Dendritic cell treated with granulocyte-macrophage colony-stimulating factor and Interleukin-4, amounts not matched to agents 40 ng/mL and 50 ng/mL, for 4 days (primary cell): ENCODE measurements at regions of chr17 and their contacts with region 1.

Region 1: DNA sequence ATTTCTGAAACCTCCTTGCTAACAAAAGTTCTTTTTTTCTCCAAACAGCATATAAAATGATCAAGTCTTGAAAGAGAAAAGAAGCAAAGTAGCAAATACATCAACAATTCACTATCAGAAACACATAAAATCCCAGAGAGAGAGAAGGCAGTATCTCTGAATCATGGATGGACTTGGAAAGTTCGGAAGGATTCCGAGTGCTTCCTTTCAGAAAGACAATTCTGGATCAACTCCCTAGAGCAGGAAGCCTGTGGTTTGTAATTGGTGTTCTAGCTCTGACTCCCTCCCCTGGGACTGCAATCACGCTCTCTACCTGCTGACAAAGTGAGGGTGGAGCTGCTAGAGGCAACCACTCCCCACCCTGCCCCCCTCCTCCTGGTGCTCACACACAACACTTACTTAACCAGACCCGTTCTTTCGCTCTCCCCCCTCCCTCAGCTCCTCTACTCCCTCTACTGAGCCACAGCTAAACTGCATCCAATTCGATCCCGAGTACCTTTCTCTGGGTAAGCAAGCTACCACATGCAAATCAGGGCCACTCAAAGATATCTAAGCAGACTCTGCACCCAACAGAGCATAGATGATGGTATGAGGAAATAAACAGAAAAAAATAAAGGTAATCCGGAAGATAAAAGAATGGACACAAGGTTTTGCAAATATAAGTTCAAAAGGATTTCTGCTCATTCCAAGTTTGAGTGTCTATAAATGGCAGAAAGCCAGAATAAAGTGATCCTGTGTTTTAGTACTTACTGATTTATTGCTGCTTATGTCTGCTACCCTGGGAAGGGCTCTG is at the start of gene RNF43:
- H3K4me3 Mint-ChIP-seq: peak within 1 kb of the TSS; percentile 54
- H3K27ac Mint-ChIP-seq: peak within 1 kb of the TSS; percentile 12
- H3K4me1 Mint-ChIP-seq: peaks cover 9% of the 10 kb centered on the region
- H3K27me3 Mint-ChIP-seq: peaks cover 12% of the 10 kb centered on the region

Region 2: DNA sequence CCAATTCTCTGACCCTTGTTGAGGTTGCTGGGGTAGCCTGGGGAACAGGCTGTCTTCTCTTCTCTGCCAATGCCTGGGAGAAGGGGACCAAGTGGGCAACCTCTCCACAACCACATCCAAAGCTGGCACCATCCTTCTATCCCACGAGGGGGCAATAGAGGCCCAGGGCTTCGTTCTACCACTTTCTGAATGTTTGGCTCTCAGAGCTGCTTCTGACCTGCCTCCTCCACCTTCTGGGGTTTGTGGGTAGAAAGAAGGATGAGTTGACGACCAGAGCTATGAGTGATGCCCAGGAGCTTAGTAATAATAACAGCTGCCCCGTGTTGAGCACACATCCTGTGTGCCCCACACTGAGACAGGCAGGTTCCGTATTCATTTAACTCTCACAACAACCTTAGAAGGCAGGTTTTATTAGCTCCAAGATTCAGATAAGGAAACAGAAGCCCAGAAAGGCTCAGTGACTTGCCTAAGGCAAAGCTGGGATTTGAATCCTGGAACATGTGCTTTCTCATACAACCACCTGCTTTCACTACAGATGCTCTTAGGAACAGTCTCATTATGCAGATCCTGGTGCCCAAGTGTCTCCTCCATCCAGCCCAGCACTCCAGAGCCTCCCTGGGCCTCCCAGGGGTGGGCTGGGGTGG is 100.0 kb before region 1 on chr17:
- intact Hi-C with region 1: loop called (anchors 2 kb)
- H3K4me3 Mint-ChIP-seq: no peak overlapping the region
- H3K27ac Mint-ChIP-seq: no peak overlapping the region
- H3K4me1 Mint-ChIP-seq: peaks cover 19% of the 10 kb centered on the region
- H3K27me3 Mint-ChIP-seq: peaks cover 61% of the 10 kb centered on the region